AG04450 (cell line): ENCODE measurements at regions of chr22 and their contacts with region 1.

Region 1: DNA sequence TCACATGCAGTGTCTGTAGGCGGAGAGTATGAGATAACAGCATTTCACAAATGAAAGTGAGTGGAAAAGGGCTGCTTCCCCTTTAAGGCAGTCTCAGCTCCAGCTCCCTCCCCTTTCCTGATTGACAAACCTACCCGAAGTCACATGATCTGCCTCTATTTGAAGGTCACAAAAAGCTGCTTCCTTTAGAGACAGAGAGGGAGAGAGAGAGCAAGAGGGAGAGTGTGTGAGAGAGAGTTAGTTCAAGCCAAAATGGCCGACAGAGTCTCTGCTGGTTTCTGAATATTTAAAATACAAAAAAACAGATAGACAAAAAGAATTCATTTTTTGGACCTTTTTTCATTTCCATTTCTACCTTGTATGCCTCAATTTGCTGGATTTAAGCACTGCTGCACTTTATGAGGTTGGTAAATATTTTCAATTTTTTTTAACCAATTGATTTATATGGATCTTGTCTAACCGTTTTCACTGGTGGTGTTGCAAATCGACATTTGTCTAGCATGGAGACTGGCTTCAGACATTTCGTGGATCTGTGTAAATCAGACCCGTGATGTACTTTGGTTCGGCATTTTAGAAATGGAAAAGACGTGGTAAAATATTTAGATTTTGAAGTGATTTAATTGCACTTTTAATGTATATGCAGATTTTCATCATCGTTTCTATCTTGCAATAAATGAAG is at the start of gene TNRC6B:
- DNase-seq: peak; percentile 92
- H3K4me3 ChIP-seq: peak within 1 kb of the TSS; percentile 92
- H3K27ac ChIP-seq: peak within 1 kb of the TSS; percentile 42
- H3K27me3 ChIP-seq: no peaks in the 10 kb centered on the region
- CTCF ChIP-seq: no peak
- polyA plus RNA-seq, gene TNRC6B: 6.6 and 7.6 TPM in 2 replicates

Region 2: DNA sequence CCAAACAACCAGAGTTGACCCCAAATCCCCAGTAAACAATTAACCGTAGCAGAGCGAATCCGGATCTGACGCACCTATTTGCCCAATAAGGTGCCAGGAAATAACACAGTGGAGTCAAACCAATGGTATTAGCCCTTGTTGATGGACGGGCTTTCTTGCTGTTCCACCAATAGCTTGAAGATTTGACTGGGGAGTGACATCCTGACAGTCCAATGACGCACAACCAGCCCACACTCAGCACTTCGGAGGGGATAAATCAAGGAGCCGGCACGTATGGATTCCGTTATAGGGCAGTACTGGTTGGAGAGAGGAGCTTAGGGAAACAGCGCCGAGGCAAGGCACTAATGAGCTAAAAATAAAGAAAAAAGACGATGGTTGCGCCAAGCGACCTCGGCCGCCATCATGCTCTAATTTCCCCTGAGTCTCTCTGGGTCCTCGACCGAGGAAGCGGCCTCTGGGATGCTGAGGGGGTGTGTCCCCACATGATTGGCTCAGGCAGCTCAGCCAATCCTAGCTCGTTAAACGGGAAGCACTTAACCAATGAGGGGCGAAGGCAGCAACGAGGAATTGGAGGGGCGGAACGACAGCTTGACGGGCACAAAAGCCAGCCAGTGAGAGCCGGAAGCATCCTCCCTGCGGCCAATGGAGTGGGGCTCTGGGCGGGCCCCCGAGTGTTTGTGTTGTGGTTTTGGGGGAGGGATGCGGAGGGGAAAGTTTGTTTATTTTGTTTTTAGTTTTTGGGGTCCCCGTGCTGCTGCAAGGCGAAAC is 133.6 kb before region 1 on chr22:
- CTCF ChIA-PET with region 1: interaction called, 14 read pairs
- POLR2A ChIA-PET with region 1: interaction called, 15 read pairs
- DNase-seq: peak; percentile 99
- H3K4me3 ChIP-seq: peak overlapping the region; percentile 96
- H3K27ac ChIP-seq: peak overlapping the region; percentile 78
- H3K27me3 ChIP-seq: peaks cover 23% of the 10 kb centered on the region
- CTCF ChIP-seq: no peak

Region 3: DNA sequence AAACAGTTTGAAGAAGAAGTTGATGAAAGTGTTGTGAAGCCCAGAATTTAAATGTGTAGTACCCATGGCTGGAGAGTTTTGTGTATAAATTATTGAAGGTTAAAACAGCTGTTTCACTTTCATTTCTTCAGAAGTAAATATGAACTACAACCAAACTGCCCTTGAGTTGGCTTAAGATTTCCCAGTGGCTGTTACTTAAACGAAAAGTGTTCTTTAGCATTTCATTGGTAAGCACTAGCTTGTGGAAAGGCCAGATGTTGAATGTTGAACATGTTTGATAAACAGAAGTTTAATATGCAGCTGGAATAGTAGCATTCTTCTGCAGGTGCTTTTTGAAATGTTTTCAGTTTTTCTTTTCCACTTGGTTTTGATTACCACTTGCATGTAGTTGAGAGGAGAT is 83.4 kb before region 1 on chr22:
- CTCF ChIA-PET with region 1: no interaction called
- POLR2A ChIA-PET with region 1: no interaction called
- DNase-seq: no peak
- H3K4me3 ChIP-seq: no peak overlapping the region
- H3K27ac ChIP-seq: no peak overlapping the region
- H3K27me3 ChIP-seq: no peaks in the 10 kb centered on the region
- CTCF ChIP-seq: no peak

Region 4: GRCh38 chr22:40196628-40197360 is 18.9 kb after region 1 on chr22:
- CTCF ChIA-PET with region 1: interaction called, 7 read pairs
- POLR2A ChIA-PET with region 1: interaction called, 19 read pairs
- DNase-seq: peak; percentile 86
- H3K4me3 ChIP-seq: no peak overlapping the region
- H3K27ac ChIP-seq: no peak overlapping the region
- H3K27me3 ChIP-seq: no peaks in the 10 kb centered on the region
- CTCF ChIP-seq: no peak

Region 5: GRCh38 chr22:40212121-40212520 is 34.2 kb after region 1 on chr22:
- CTCF ChIA-PET with region 1: no interaction called
- POLR2A ChIA-PET with region 1: no interaction called
- DNase-seq: no peak
- H3K4me3 ChIP-seq: no peak overlapping the region
- H3K27ac ChIP-seq: no peak overlapping the region
- H3K27me3 ChIP-seq: no peaks in the 10 kb centered on the region
- CTCF ChIP-seq: no peak